ENCODE measurements at regions of chr7 and their contacts with region 1.

Region 1: DNA sequence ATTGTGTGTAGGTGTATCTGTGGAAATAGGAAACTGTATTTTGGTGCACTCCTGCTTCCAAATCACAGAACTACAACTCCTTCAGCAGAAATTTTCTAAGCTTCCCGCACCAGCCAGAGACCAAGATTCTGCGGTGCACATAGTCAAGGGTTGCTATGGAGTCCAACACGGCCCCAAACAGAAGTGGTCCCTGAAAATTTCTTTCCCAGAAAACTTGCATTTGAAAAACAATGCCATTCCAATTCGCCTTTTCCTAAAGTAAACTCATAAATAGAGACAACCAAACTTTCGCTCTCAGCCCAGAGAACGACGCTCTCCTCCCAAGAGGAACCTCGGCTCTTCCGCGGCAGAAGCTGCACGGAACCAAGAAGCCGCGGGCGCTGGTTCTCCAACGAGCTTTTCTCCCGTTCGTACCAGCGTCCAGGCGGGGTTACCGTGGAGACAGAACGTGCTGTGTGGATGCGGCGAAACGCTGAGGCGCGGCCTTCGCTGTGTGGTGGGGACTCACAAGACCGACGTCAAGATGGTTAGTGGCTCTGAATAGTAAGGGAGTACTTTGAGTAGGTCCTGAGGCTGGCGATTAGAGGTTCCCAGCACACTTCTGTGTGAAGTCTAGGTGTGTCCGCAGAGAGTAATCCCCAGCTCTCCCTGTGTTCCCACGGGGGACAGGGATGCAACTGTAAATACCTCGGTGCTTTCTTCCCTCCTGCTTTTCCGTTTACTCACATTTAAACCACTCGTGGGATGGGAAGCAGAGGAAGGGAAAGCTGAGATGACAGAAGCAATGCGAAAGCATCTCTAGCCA is 24.0 kb upstream of the ZC3HAV1 start:
- DNase-seq: peak; percentile 86 to 89 (median 88)
- H3K4me3 ChIP-seq: peak overlapping the region; percentile 25 to 55
- H3K4me3 Mint-ChIP-seq: peak overlapping the region; percentile 87 to 97 (median 92)
- H3K27ac ChIP-seq: peak overlapping the region; percentile 56
- H3K27ac Mint-ChIP-seq: peak overlapping the region; percentile 73 to 97 (median 93)
- H3K4me1 ChIP-seq: peaks cover 14% of the 10 kb centered on the region
- H3K4me1 Mint-ChIP-seq: peaks cover 5 to 22% (median 17%) of the 10 kb centered on the region in 4 donors
- H3K27me3 ChIP-seq: no peaks in the 10 kb centered on the region
- H3K27me3 Mint-ChIP-seq: no peaks in the 10 kb centered on the region

Region 2: GRCh38 chr7:138720286-138720685 is 413.3 kb before region 1 on chr7:
- CTCF ChIA-PET with region 1: no interaction called
- POLR2A ChIA-PET with region 1: no interaction called
- intact Hi-C with region 1: no loop called
- DNase-seq: no peak
- H3K4me3 ChIP-seq: no peak overlapping the region
- H3K4me3 Mint-ChIP-seq: no peak overlapping the region
- H3K27ac ChIP-seq: no peak overlapping the region
- H3K27ac Mint-ChIP-seq: no peak overlapping the region
- H3K4me1 ChIP-seq: no peaks in the 10 kb centered on the region
- H3K4me1 Mint-ChIP-seq: peaks cover 13 to 20% (median 16%) of the 10 kb centered on the region in 4 donors
- H3K27me3 ChIP-seq: no peaks in the 10 kb centered on the region
- H3K27me3 Mint-ChIP-seq: peaks cover 3 to 4% of the 10 kb centered on the region in 2 donors

Region 3: DNA sequence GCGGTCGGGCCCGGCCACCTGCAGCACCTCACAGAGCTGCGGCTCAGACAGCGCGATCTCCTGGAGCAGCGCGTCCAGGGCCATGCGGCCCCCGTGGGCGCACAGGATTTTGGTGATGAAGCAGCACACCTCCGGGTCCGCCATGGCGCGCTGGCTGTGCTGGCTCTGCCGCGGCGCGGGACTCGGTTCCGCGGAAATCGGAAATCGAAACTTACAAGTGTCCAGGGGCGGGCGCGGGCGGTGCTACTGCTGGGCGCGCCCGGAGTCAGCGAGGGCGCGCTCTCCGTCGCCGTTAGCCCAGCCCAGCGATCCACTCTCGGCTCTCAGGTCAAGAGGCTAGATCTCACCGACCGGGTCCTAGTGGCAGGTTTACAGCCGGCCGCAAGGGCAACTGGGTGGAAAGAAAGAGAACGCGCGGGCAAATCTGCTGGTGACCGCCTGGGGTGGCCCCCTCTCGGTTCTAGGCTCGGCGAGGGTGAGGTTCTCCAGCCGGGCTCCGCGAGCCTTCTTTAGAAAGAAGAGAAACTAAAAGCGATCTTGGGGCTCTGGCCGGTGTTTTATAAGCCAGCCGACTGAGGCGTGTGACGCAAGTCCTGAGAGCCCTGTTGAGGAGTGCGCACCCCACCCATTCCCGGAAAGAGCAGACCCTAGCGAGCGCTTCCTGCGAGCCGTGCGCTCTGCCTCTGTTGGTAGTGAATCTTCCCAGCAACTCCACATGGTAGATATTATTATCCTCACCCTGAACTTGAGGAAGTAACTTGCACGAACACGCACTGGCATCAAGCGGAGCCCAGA is 24.2 kb before region 1 on chr7 and contains the start of gene ZC3HAV1:
- CTCF ChIA-PET with region 1: interaction called, 9 read pairs
- POLR2A ChIA-PET with region 1: interaction called, 8 read pairs
- intact Hi-C with region 1: loop called (anchors 1 kb)
- DNase-seq: peak; percentile 89 to 94 (median 93)
- H3K4me3 ChIP-seq: peak within 1 kb of the TSS; percentile 90 to 96
- H3K4me3 Mint-ChIP-seq: peak within 1 kb of the TSS; percentile 95 to 99 (median 97)
- H3K27ac ChIP-seq: peak within 1 kb of the TSS; percentile 96
- H3K27ac Mint-ChIP-seq: peak within 1 kb of the TSS; percentile 88 to 100 (median 99)
- H3K4me1 ChIP-seq: peaks cover 29% of the 10 kb centered on the region
- H3K4me1 Mint-ChIP-seq: peaks cover 28 to 59% (median 38%) of the 10 kb centered on the region in 4 donors
- H3K27me3 ChIP-seq: no peaks in the 10 kb centered on the region
- H3K27me3 Mint-ChIP-seq: no peaks in the 10 kb centered on the region
- total RNA-seq, gene ZC3HAV1: 154 to 159 TPM

Region 4: GRCh38 chr7:139118234-139118804 is 15.2 kb before region 1 on chr7:
- CTCF ChIA-PET with region 1: interaction called, 4 read pairs
- POLR2A ChIA-PET with region 1: interaction called, 19 read pairs
- intact Hi-C with region 1: loop called (anchors 1 kb)
- DNase-seq: no peak
- H3K4me3 ChIP-seq: peak overlapping the region in 1 of 2 donors; percentile 8
- H3K4me3 Mint-ChIP-seq: peak overlapping the region; percentile 48 to 86 (median 78)
- H3K27ac ChIP-seq: peak overlapping the region; percentile 4
- H3K27ac Mint-ChIP-seq: peak overlapping the region; percentile 59 to 93 (median 89)
- H3K4me1 ChIP-seq: peaks cover 28% of the 10 kb centered on the region
- H3K4me1 Mint-ChIP-seq: peaks cover 25 to 52% (median 32%) of the 10 kb centered on the region in 4 donors
- H3K27me3 ChIP-seq: no peaks in the 10 kb centered on the region
- H3K27me3 Mint-ChIP-seq: peaks cover 0 to 3% of the 10 kb centered on the region in 2 donors

Region 5: DNA sequence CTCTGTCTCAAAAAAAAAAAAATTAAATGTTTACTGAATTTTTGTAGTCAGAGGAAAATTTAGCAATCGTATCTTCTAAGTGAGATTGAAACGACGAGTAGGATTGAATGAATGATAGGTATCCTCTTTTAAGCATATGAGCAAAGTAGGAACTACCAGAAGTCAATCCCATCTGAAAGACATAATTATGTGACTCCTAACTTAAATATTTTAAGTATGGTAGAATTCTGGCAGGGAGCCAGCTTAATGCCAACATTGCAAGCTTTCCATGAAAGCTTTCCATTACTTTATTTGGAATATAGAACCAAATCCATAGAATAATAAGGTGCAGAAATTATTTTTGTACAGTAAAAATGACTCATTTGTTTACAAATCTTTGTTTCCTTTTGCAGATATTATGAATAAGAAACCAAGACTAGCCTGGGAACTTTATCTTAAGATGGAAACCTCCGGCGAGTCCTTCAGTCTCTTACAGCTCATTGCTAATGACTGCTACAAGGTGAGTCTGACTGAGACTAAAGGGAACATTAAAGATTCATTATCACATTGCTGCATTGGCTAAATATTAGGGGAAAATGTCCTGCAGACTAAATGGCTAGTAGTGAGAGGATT is 47.3 kb after region 1 on chr7:
- CTCF ChIA-PET with region 1: no interaction called
- POLR2A ChIA-PET with region 1: no interaction called
- intact Hi-C with region 1: no loop called
- DNase-seq: no peak
- H3K4me3 ChIP-seq: no peak overlapping the region
- H3K4me3 Mint-ChIP-seq: no peak overlapping the region
- H3K27ac ChIP-seq: no peak overlapping the region
- H3K27ac Mint-ChIP-seq: no peak overlapping the region
- H3K4me1 ChIP-seq: peaks cover 3% of the 10 kb centered on the region
- H3K4me1 Mint-ChIP-seq: peaks cover 0 to 4% (median under 1%) of the 10 kb centered on the region in 4 donors
- H3K27me3 ChIP-seq: no peaks in the 10 kb centered on the region
- H3K27me3 Mint-ChIP-seq: no peaks in the 10 kb centered on the region

Region 6: GRCh38 chr7:139230774-139231512 is 97.4 kb after region 1 on chr7 and contains the start of gene UBN2:
- CTCF ChIA-PET with region 1: interaction called, 3 read pairs
- POLR2A ChIA-PET with region 1: interaction called, 15 read pairs
- intact Hi-C with region 1: loop called (anchors 1 kb)
- DNase-seq: peak; percentile 79 to 90 (median 80)
- H3K4me3 ChIP-seq: peak within 1 kb of the TSS; percentile 79 to 96
- H3K4me3 Mint-ChIP-seq: peak within 1 kb of the TSS; percentile 98 to 100 (median 100)
- H3K27ac ChIP-seq: peak within 1 kb of the TSS; percentile 74
- H3K27ac Mint-ChIP-seq: peak within 1 kb of the TSS; percentile 96 to 100 (median 98)
- H3K4me1 ChIP-seq: peaks cover 19% of the 10 kb centered on the region
- H3K4me1 Mint-ChIP-seq: peaks cover 10 to 36% (median 24%) of the 10 kb centered on the region in 4 donors
- H3K27me3 ChIP-seq: no peaks in the 10 kb centered on the region
- H3K27me3 Mint-ChIP-seq: no peaks in the 10 kb centered on the region
- total RNA-seq, gene UBN2: 23.6 to 26.7 TPM

Region 7: DNA sequence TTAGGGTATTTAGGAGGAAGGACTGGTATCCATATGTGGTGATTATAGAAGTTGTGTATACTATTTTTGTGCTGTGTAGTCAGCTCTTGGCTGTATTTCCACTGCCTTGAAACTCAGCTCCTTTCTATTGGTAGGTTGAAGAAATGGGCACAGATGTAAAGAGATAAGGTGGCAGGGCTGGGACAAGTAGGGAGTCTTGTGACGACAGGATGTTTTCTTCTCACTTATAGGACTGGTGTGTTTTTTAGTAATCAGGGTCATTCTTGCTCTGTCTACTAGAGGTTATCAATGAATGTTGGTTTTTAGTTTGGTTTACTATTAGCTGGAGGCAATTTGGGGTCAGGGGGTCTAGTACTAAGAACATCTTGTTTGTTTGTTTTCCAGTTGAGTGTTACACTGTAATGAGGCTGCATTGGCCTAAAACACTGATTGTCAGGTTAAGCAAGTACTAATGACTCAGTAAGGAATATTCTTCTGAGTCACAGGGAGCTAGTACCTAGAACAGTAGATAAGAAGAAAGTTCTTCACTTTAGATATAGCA is 109.3 kb after region 1 on chr7:
- CTCF ChIA-PET with region 1: no interaction called
- POLR2A ChIA-PET with region 1: no interaction called
- intact Hi-C with region 1: no loop called
- DNase-seq: no peak
- H3K4me3 ChIP-seq: no peak overlapping the region
- H3K4me3 Mint-ChIP-seq: no peak overlapping the region
- H3K27ac ChIP-seq: no peak overlapping the region
- H3K27ac Mint-ChIP-seq: peak overlapping the region in 1 of 7 donors; percentile 24
- H3K4me1 ChIP-seq: no peaks in the 10 kb centered on the region
- H3K4me1 Mint-ChIP-seq: peaks cover 0 to 14% (median 4%) of the 10 kb centered on the region in 4 donors
- H3K27me3 ChIP-seq: no peaks in the 10 kb centered on the region
- H3K27me3 Mint-ChIP-seq: no peaks in the 10 kb centered on the region